Activated CD8-positive, alpha-beta T cell treated with anti-CD3 and anti-CD28 coated beads for 36 hours (primary cell): ENCODE measurements at regions of chr2 and their contacts with region 1.

Region 1: DNA sequence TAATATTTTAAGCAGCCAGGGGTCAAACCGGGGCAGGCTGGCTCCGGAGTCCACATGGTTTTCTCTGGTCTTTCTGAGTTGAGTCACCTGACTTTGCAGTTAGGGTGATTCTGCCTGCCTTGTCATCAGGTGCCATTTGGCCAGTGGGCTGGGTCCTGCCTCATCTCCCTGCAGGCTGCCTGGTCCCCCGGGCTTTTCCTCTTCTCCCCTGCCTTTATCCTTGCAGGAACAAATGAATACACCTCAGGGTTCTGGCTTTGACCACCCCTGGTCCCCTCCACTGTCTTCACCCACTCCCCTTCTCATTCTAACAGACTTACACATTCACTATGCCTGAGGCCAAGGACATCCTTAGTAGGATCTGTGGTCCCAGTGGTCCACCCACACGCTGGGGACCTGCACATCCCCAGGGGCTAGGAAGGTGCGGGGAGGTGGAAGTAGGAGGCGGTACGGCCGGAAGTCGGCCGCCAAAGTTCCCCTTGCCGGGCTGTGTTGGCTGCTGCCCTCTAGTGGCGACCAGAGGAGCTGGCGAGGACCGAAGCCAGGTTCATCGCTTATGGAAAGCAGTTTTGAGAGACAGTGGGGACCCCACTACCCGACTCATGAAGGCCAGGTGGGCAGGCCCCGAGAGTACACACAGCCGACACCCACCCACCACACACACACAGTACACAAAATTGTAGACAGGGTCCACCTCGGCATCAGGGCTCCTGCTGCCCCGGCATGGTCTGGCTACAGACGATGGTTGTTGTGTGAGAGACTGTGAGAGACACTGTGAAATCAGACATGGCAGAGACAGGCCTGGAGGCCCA is 6.3 kb upstream of the TEX261 start:
- DNase-seq: peak; percentile 86
- ATAC-seq: peak; percentile 96
- H3K4me3 Mint-ChIP-seq: peak overlapping the region; percentile 72
- H3K27ac Mint-ChIP-seq: peak overlapping the region; percentile 79
- H3K4me1 Mint-ChIP-seq: peaks cover 16% of the 10 kb centered on the region
- H3K27me3 Mint-ChIP-seq: peaks cover 3% of the 10 kb centered on the region
- CTCF ChIP-seq: peak; percentile 89

Region 2: DNA sequence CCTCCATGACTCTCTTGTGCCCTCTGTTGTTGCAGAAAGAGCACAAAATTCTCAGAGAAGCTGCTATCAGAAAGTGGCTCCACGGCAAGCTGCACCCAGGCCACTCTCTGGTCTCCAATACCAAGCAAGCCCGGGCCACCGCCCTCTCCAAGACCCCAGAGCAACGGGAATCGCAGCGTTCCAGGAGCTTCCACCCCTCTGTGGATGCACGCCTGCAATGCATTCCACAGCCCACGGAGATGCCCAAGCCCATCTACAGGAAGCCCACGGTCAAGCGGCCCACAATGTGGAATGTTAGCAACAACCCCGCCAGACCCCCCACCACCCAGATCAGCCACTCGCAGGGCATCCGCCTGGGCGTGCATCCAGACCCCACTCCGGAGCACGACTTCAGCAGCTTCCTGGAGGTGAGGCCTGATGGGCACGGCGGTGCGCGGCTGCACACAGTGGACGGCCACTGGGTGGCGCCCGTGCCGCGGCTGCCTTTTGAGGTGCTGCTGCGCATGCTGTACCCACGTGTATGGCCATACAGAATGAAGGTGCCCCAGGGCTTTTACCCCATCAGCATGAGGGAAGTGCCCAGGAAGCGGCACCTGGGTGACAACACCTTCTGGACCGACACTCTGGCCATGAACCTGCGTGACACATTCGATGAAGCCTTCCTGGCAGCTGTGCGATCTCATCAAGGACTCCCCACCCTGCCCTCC is 16.3 kb before region 1 on chr2:
- CTCF ChIA-PET with region 1: interaction called, 39 read pairs
- POLR2A ChIA-PET with region 1: interaction called, 3 read pairs
- intact Hi-C with region 1: no loop called
- DNase-seq: peak; percentile 88
- ATAC-seq: peak; percentile 100
- H3K4me3 Mint-ChIP-seq: no peak overlapping the region
- H3K27ac Mint-ChIP-seq: no peak overlapping the region
- H3K4me1 Mint-ChIP-seq: peaks cover 10% of the 10 kb centered on the region
- H3K27me3 Mint-ChIP-seq: no peaks in the 10 kb centered on the region
- CTCF ChIP-seq: peak; percentile 92

Region 3: DNA sequence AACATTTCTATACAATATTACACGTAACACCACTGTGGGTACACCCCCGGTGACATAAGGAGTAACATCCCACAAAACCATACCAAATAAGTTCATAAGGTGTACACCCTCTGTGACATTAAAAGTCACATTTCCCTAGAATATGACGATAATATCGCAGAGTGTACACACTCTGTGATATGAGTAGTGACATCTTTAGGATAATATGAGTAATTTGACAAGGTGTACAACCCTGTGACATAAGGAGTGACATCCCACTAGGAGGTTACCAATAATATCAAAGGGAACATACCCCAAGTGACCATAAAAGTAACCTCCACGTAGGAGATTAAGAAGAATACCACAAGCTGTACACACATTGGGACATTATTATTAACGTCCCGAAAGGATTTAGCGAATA is 17.6 kb after region 1 on chr2:
- CTCF ChIA-PET with region 1: interaction called, 13 read pairs
- POLR2A ChIA-PET with region 1: no interaction called
- intact Hi-C with region 1: no loop called
- DNase-seq: no peak
- ATAC-seq: no peak
- H3K4me3 Mint-ChIP-seq: no peak overlapping the region
- H3K27ac Mint-ChIP-seq: no peak overlapping the region
- H3K4me1 Mint-ChIP-seq: peaks cover 7% of the 10 kb centered on the region
- H3K27me3 Mint-ChIP-seq: no peaks in the 10 kb centered on the region
- CTCF ChIP-seq: no peak